CD8-positive, alpha-beta T cell (primary cell): ENCODE measurements at regions of chr6 and their contacts with region 1.

Region 1: GRCh38 chr6:2634139-2634964 is 116.4 kb downstream of the MYLK4 start:
- DNase-seq: peak; percentile 62 to 92 (median 80)
- ATAC-seq: peak; percentile 95
- H3K4me3 ChIP-seq: peak overlapping the region; percentile 35 to 52
- H3K4me3 Mint-ChIP-seq: peak overlapping the region; percentile 70
- H3K27ac ChIP-seq: no peak overlapping the region
- H3K27ac Mint-ChIP-seq: no peak overlapping the region
- H3K4me1 ChIP-seq: peaks cover 6% of the 10 kb centered on the region
- H3K4me1 Mint-ChIP-seq: peaks cover 9% of the 10 kb centered on the region
- H3K27me3 ChIP-seq: peaks cover 0 to 6% of the 10 kb centered on the region in 2 experiments
- H3K27me3 Mint-ChIP-seq: peaks cover 9% of the 10 kb centered on the region
- CTCF ChIP-seq: peak; percentile 90

Region 2: GRCh38 chr6:1596088-1596852 is 1038.1 kb before region 1 on chr6:
- CTCF ChIA-PET with region 1: interaction called, 218 read pairs
- POLR2A ChIA-PET with region 1: interaction called, 3 read pairs
- intact Hi-C with region 1: loop called in 1 of 2 experiments (anchors 1 kb)
- DNase-seq: peak; percentile 30 to 78 (median 67)
- ATAC-seq: peak; percentile 84
- H3K4me3 ChIP-seq: no peak overlapping the region
- H3K4me3 Mint-ChIP-seq: no peak overlapping the region
- H3K27ac ChIP-seq: no peak overlapping the region
- H3K27ac Mint-ChIP-seq: no peak overlapping the region
- H3K4me1 ChIP-seq: no peaks in the 10 kb centered on the region
- H3K4me1 Mint-ChIP-seq: peaks cover 2% of the 10 kb centered on the region
- H3K27me3 ChIP-seq: peaks cover 3 to 16% of the 10 kb centered on the region in 2 experiments
- H3K27me3 Mint-ChIP-seq: peaks cover 59% of the 10 kb centered on the region
- CTCF ChIP-seq: peak; percentile 76

Region 3: DNA sequence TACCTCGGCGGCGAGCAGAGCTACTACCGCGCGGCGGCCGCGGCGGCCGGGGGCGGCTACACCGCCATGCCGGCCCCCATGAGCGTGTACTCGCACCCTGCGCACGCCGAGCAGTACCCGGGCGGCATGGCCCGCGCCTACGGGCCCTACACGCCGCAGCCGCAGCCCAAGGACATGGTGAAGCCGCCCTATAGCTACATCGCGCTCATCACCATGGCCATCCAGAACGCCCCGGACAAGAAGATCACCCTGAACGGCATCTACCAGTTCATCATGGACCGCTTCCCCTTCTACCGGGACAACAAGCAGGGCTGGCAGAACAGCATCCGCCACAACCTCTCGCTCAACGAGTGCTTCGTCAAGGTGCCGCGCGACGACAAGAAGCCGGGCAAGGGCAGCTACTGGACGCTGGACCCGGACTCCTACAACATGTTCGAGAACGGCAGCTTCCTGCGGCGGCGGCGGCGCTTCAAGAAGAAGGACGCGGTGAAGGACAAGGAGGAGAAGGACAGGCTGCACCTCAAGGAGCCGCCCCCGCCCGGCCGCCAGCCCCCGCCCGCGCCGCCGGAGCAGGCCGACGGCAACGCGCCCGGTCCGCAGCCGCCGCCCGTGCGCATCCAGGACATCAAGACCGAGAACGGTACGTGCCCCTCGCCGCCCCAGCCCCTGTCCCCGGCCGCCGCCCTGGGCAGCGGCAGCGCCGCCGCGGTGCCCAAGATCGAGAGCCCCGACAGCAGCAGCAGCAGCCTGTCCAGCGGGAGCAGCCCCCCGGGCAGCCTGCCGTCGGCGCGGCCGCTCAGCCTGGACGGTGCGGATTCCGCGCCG is 1023.6 kb before region 1 on chr6:
- CTCF ChIA-PET with region 1: interaction called, 38 read pairs
- POLR2A ChIA-PET with region 1: interaction called, 3 read pairs
- intact Hi-C with region 1: no loop called
- DNase-seq: peak in 2 of 9 experiments; percentile 35 to 45
- ATAC-seq: peak; percentile 29
- H3K4me3 ChIP-seq: peak overlapping the region in 1 of 2 experiments; percentile 39
- H3K4me3 Mint-ChIP-seq: peak overlapping the region; percentile 79
- H3K27ac ChIP-seq: no peak overlapping the region
- H3K27ac Mint-ChIP-seq: no peak overlapping the region
- H3K4me1 ChIP-seq: peaks cover 49% of the 10 kb centered on the region
- H3K4me1 Mint-ChIP-seq: peaks cover 51% of the 10 kb centered on the region
- H3K27me3 ChIP-seq: peaks cover 45 to 58% of the 10 kb centered on the region in 2 experiments
- H3K27me3 Mint-ChIP-seq: peaks cover 61% of the 10 kb centered on the region
- CTCF ChIP-seq: no peak

Region 4: DNA sequence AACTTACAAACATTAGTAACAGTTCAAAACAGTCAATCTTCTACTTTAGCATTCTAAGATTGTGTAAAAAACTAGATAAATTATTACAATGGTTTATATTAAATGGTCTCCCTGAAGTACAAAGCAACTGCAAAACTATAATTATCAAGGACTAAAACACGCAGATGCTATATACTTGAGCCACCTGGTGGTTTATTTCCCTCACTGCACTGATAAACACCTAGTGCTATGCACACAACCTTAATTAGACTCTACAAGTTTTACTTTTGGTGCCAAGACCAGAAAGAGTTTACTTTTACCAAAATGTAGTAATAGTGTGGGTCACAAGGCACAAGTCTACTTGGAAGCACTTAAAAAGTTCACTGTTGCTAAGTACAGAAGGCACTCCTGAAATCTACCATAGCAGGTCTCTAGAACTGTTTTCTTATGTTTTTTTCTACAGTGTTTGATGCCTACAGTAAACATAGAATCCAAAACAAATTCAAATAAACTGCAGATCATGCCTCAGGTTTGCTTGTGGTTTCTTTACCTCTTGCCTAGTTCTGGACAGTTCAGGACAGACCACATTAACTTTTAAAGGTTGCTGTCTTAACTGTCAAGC is 438.2 kb before region 1 on chr6:
- CTCF ChIA-PET with region 1: interaction called, 5 read pairs
- POLR2A ChIA-PET with region 1: no interaction called
- intact Hi-C with region 1: loop called in 1 of 2 experiments (anchors 5 kb)
- DNase-seq: peak in 4 of 9 experiments; percentile 26 to 68 (median 51)
- ATAC-seq: peak; percentile 72
- H3K4me3 ChIP-seq: no peak overlapping the region
- H3K4me3 Mint-ChIP-seq: no peak overlapping the region
- H3K27ac ChIP-seq: no peak overlapping the region
- H3K27ac Mint-ChIP-seq: no peak overlapping the region
- H3K4me1 ChIP-seq: no peaks in the 10 kb centered on the region
- H3K4me1 Mint-ChIP-seq: peaks cover 3% of the 10 kb centered on the region
- H3K27me3 ChIP-seq: no peaks in the 10 kb centered on the region
- H3K27me3 Mint-ChIP-seq: no peaks in the 10 kb centered on the region
- CTCF ChIP-seq: peak; percentile 86

Region 5: GRCh38 chr6:2353412-2354137 is 280.8 kb before region 1 on chr6:
- CTCF ChIA-PET with region 1: interaction called, 7 read pairs
- POLR2A ChIA-PET with region 1: no interaction called
- intact Hi-C with region 1: loop called (anchors 5 kb)
- DNase-seq: peak; percentile 10 to 62 (median 48)
- ATAC-seq: no peak
- H3K4me3 ChIP-seq: no peak overlapping the region
- H3K4me3 Mint-ChIP-seq: no peak overlapping the region
- H3K27ac ChIP-seq: no peak overlapping the region
- H3K27ac Mint-ChIP-seq: no peak overlapping the region
- H3K4me1 ChIP-seq: no peaks in the 10 kb centered on the region
- H3K4me1 Mint-ChIP-seq: no peaks in the 10 kb centered on the region
- H3K27me3 ChIP-seq: no peaks in the 10 kb centered on the region
- H3K27me3 Mint-ChIP-seq: no peaks in the 10 kb centered on the region
- CTCF ChIP-seq: peak; percentile 75

Region 6: DNA sequence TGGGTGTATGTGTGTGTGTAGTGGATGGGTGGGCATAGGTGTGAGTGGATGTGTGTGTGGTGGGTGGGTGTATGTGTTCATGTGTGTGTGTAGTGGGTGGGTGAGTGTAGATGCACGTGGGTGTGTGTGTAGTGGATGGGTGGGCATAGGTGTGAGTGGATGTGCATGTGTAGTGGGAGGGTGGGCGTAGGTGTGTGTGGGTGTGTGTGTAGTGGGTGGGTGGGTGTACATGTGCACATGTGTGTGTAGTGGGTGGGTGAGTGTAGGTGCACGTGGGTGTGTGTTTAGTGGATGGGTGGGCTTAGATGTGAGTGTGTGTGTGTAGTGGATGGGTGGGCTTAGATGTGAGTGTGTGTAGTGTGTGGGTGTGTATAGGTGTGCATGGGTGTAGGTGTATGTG is 12.0 kb after region 1 on chr6:
- CTCF ChIA-PET with region 1: interaction called, 34 read pairs
- POLR2A ChIA-PET with region 1: no interaction called
- intact Hi-C with region 1: no loop called
- DNase-seq: no peak
- ATAC-seq: no peak
- H3K4me3 ChIP-seq: no peak overlapping the region
- H3K4me3 Mint-ChIP-seq: no peak overlapping the region
- H3K27ac ChIP-seq: no peak overlapping the region
- H3K27ac Mint-ChIP-seq: no peak overlapping the region
- H3K4me1 ChIP-seq: no peaks in the 10 kb centered on the region
- H3K4me1 Mint-ChIP-seq: no peaks in the 10 kb centered on the region
- H3K27me3 ChIP-seq: peaks cover 6 to 9% of the 10 kb centered on the region in 2 experiments
- H3K27me3 Mint-ChIP-seq: peaks cover 34% of the 10 kb centered on the region
- CTCF ChIP-seq: no peak

Region 7: GRCh38 chr6:2669067-2669700 is 34.8 kb after region 1 on chr6:
- CTCF ChIA-PET with region 1: no interaction called
- POLR2A ChIA-PET with region 1: no interaction called
- intact Hi-C with region 1: no loop called
- DNase-seq: no peak
- ATAC-seq: no peak
- H3K4me3 ChIP-seq: no peak overlapping the region
- H3K4me3 Mint-ChIP-seq: no peak overlapping the region
- H3K27ac ChIP-seq: no peak overlapping the region
- H3K27ac Mint-ChIP-seq: no peak overlapping the region
- H3K4me1 ChIP-seq: no peaks in the 10 kb centered on the region
- H3K4me1 Mint-ChIP-seq: no peaks in the 10 kb centered on the region
- H3K27me3 ChIP-seq: no peaks in the 10 kb centered on the region
- H3K27me3 Mint-ChIP-seq: no peaks in the 10 kb centered on the region
- CTCF ChIP-seq: no peak

Region 8: GRCh38 chr6:2749969-2750600 is 115.7 kb after region 1 on chr6:
- CTCF ChIA-PET with region 1: no interaction called
- POLR2A ChIA-PET with region 1: no interaction called
- intact Hi-C with region 1: no loop called
- DNase-seq: peak; percentile 46 to 78 (median 71)
- ATAC-seq: peak; percentile 86
- H3K4me3 ChIP-seq: no peak overlapping the region
- H3K4me3 Mint-ChIP-seq: no peak overlapping the region
- H3K27ac ChIP-seq: no peak overlapping the region
- H3K27ac Mint-ChIP-seq: no peak overlapping the region
- H3K4me1 ChIP-seq: peaks cover 8% of the 10 kb centered on the region
- H3K4me1 Mint-ChIP-seq: peaks cover 6% of the 10 kb centered on the region
- H3K27me3 ChIP-seq: peaks cover 0 to 2% of the 10 kb centered on the region in 2 experiments
- H3K27me3 Mint-ChIP-seq: peaks cover 5% of the 10 kb centered on the region
- CTCF ChIP-seq: peak; percentile 99